ENCODE measurements at regions of chr17 and their contacts with region 1.

Region 1: DNA sequence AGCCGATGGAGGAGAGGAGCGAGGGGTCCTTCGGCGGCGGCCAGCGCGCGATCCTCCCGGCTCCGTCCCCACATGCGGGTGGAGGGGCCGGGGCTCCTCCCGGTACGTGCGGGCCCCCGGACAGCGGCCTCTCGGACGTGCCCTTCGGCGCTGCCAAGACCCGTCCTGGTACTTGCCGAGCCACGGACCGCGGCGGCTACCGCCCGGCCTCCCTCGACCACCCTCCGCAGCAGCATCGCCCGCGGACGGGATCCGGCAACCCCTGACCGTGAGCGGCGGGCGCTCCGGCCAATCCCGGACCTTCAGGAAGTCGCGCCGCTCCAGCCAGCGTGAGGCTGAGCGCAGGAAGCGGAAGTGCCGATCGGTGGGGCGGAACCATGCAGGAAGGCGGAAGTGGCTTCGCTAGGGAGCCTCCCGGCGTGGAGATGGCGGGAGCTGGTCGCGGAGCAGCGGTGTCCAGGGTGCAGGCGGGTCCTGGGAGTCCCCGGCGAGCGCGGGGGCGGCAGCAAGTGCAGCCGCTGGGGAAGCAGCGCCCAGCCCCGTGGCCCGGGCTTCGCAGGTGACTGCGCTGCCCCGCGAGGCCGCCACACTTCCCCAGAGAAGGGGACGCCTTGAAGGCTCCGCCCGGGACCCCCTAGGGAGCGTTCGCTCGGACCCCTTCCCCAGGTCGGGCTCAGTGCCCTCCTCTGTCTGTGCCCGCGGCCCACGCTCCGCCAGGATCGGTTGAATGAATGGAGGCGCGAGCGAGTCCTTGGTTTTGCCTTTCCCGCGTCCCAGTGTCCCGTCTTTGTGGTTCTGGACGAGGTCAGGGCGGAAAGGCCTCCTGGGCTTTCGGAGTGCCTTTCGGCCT is at the starts of genes CCDC137 and OXLD1:
- DNase-seq: peak; percentile 98

Region 2: GRCh38 chr17:81566461-81567126 is 100.0 kb before region 1 on chr17:
- CTCF ChIA-PET with region 1: no interaction called
- POLR2A ChIA-PET with region 1: no interaction called
- DNase-seq: no peak

Region 3: DNA sequence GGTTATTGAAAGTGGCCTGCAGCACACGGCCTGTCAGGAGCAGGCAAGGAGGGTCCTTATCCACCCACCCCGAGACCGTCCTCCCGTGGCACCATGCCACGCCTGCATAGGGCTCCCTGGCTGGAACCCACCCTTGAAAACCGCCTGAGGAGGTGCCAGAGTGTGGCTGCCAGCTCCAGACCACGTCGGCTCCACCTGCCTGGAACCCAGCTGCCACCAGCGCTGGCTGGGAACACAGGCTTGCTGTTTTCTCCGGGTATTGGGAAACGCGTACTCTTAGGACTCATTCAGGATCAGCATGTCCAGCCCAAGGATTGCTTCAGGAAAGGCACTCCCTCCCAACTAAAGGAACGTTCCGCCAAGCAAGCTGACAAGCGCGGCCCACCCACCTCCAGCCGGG is 10.3 kb after region 1 on chr17:
- CTCF ChIA-PET with region 1: interaction called, 3 read pairs
- POLR2A ChIA-PET with region 1: interaction called, 26 read pairs
- DNase-seq: no peak

Region 4: DNA sequence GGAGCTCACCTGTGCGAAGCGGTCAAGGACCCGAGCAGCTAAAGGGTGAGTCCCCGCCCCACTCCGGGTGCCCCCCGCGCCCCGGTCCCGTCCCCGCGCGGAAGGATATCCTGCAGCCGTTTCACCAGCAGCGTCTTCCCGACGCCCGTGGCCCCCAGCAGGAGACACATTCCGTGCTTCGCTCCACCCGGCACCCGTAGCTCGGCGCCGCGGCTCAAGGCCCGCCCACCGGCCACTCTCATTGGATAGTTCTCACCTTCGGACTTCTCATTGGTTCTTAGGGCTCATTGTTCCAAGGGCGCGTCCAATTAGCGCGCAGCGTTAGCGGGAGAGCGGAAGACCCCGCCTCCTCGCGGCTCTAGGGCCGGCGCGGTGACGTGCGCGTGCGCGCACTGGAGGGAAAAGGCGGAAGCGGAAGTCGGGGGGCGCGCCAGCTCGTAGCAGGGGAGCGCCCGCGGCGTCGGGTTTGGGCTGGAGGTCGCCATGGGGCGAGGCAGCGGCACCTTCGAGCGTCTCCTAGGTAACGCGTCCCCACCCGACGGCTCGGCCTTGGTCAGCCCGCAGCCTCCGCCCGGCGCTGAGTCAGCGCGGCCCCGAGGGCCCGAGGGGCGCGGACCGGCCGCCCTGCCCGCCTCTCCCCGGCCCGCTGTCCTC is 17.1 kb after region 1 on chr17 and contains the starts of genes ARL16 and HGS:
- CTCF ChIA-PET with region 1: interaction called, 3 read pairs
- POLR2A ChIA-PET with region 1: interaction called, 26 read pairs
- DNase-seq: peak; percentile 99